MCF 10A (cell line): ENCODE measurements at regions of chr20 and their contacts with region 1.

Region 1: GRCh38 chr20:49541733-49542513 is 26.0 kb downstream of the PTGIS start:
- DNase-seq: peak; percentile 86
- H3K4me3 Mint-ChIP-seq: no peak overlapping the region
- H3K27ac Mint-ChIP-seq: no peak overlapping the region
- H3K4me1 Mint-ChIP-seq: no peaks in the 10 kb centered on the region
- H3K27me3 Mint-ChIP-seq: no peaks in the 10 kb centered on the region
- CTCF ChIP-seq: peak; percentile 78

Region 2: GRCh38 chr20:49338061-49338460 is 203.9 kb before region 1 on chr20:
- CTCF ChIA-PET with region 1: interaction called, 80 read pairs
- POLR2A ChIA-PET with region 1: no interaction called
- intact Hi-C with region 1: no loop called
- DNase-seq: no peak
- H3K4me3 Mint-ChIP-seq: no peak overlapping the region
- H3K27ac Mint-ChIP-seq: peak overlapping the region; percentile 57
- H3K4me1 Mint-ChIP-seq: peaks cover 11% of the 10 kb centered on the region
- H3K27me3 Mint-ChIP-seq: peaks cover 3% of the 10 kb centered on the region
- CTCF ChIP-seq: no peak

Region 3: GRCh38 chr20:49559401-49560081 is 17.6 kb after region 1 on chr20:
- CTCF ChIA-PET with region 1: interaction called, 34 read pairs
- POLR2A ChIA-PET with region 1: interaction called, 3 read pairs
- intact Hi-C with region 1: no loop called
- DNase-seq: peak; percentile 68
- H3K4me3 Mint-ChIP-seq: no peak overlapping the region
- H3K27ac Mint-ChIP-seq: no peak overlapping the region
- H3K4me1 Mint-ChIP-seq: peaks cover 14% of the 10 kb centered on the region
- H3K27me3 Mint-ChIP-seq: peaks cover 34% of the 10 kb centered on the region
- CTCF ChIP-seq: no peak

Region 4: GRCh38 chr20:49846206-49846807 is 304.4 kb after region 1 on chr20:
- CTCF ChIA-PET with region 1: interaction called, 39 read pairs
- POLR2A ChIA-PET with region 1: interaction called, 3 read pairs
- intact Hi-C with region 1: loop called (anchors 1 kb)
- DNase-seq: peak; percentile 79
- H3K4me3 Mint-ChIP-seq: no peak overlapping the region
- H3K27ac Mint-ChIP-seq: no peak overlapping the region
- H3K4me1 Mint-ChIP-seq: peaks cover 6% of the 10 kb centered on the region
- H3K27me3 Mint-ChIP-seq: no peaks in the 10 kb centered on the region
- CTCF ChIP-seq: peak; percentile 46

Region 5: DNA sequence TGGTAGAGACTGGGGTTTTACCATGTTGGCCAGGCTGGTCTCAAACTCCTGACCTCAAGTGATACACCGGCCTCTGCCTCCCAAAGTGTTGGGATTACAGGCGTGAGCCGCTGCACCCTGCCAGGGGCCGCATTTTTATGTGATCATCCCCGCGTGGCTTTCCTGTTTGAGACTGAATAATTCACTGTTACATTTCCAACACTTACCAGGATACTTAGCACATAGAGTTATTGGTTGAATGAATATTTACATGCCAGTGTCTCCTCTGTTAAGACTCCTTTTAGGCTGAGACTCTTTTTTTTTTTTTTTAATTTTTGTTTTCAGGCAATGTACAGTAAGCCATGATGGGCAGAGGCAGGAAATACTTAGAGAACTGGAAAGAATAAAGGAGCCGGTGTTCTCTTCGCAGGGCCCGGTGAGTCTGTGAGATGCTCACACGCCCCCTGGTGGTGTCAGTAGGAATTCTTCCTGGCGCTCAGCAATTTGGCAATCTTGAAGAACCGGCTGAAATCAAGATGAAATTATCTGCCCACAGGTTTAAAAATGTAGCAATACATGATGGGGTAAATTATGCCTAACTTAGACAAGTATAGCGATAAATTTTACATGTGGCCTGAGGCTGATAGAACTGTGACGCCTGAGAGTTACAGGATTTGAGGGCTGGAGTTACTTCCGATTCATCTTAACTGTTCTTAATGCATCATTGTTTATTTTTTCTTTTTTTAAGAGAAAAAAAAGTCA is 386.6 kb after region 1 on chr20:
- CTCF ChIA-PET with region 1: interaction called, 7 read pairs
- POLR2A ChIA-PET with region 1: no interaction called
- intact Hi-C with region 1: loop called (anchors 1 kb)
- DNase-seq: peak; percentile 84
- H3K4me3 Mint-ChIP-seq: no peak overlapping the region
- H3K27ac Mint-ChIP-seq: no peak overlapping the region
- H3K4me1 Mint-ChIP-seq: no peaks in the 10 kb centered on the region
- H3K27me3 Mint-ChIP-seq: no peaks in the 10 kb centered on the region
- CTCF ChIP-seq: peak; percentile 80

Region 6: DNA sequence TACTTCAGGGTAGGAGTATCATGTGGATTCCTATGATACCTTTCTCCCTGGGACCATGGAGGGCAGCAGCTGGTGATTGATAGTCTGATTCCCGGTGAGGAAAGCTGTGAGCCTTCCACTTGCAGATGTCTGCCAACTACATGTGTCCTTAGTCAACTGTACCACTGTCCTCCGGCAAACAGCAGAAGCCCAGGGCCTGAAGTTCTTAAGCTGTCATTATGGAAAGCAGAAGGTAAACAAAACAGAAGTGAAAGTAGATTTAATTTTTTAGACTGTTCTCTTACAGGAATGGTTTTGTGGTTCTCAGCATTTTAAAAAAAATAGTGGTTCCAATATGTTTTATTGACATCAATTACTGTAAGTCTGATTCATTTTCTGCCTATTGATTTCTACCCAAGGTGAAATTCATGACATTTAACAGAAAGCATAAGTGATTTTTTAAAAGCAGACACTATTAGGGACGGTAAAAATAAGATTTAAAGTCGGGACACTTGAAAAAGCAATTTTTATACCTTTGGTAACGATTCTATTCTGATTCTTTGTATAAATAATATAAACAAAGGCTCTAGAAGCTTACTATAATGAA is 1004.9 kb after region 1 on chr20:
- CTCF ChIA-PET with region 1: no interaction called
- POLR2A ChIA-PET with region 1: no interaction called
- intact Hi-C with region 1: no loop called
- DNase-seq: no peak
- H3K4me3 Mint-ChIP-seq: no peak overlapping the region
- H3K27ac Mint-ChIP-seq: peak overlapping the region; percentile 41
- H3K4me1 Mint-ChIP-seq: peaks cover 31% of the 10 kb centered on the region
- H3K27me3 Mint-ChIP-seq: no peaks in the 10 kb centered on the region
- CTCF ChIP-seq: no peak